Esophagus squamous epithelium (tissue), 5 donors: ENCODE measurements at regions of chr2 and their contacts with region 1.

Region 1: GRCh38 chr2:76599732-76600368 is 889.1 kb upstream of the GCFC2 start:
- DNase-seq: no peak
- H3K4me3 ChIP-seq: no peak overlapping the region
- H3K27ac ChIP-seq: no peak overlapping the region
- H3K4me1 ChIP-seq: no peaks in the 10 kb centered on the region
- H3K27me3 ChIP-seq: no peaks in the 10 kb centered on the region
- CTCF ChIP-seq: peak; percentile 25 to 62 (median 54)
- POLR2A ChIP-seq: no peak

Region 2: DNA sequence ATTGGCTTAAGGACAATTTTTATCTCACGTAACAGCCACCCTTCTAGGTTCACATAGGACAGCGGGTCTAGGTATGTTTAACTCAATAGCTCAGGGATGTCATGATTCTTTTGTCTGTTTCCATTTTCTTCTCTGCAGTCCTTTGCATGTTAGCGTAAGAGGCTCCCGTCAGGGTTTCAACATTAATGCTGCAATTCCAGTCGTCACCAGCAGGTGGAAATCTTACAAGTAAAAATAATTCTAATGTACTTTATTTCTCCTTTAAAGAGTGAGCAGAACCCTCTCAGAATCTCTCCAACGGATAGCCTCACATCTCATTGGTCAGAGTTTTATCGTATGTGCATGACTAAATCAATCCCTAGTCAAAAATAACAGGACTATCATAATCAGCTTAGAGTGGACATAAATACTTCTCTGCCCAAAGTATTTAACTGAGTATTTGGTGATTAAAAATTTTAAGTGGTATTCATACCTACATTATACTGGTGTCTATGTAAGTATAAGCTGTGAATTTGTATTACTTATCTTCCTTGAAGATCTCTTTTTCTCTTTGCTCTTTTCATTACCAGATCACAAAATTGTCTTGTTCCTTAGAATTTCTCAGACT is 401.9 kb before region 1 on chr2:
- intact Hi-C with region 1: loop called (anchors 10 kb)
- DNase-seq: no peak
- H3K4me3 ChIP-seq: no peak overlapping the region
- H3K27ac ChIP-seq: no peak overlapping the region
- H3K4me1 ChIP-seq: no peaks in the 10 kb centered on the region
- H3K27me3 ChIP-seq: no peaks in the 10 kb centered on the region
- CTCF ChIP-seq: peak in 5 of 6 experiments; percentile 53 to 72 (median 60)
- POLR2A ChIP-seq: no peak

Region 3: GRCh38 chr2:76310894-76311630 is 288.8 kb before region 1 on chr2:
- intact Hi-C with region 1: no loop called
- DNase-seq: no peak
- H3K4me3 ChIP-seq: no peak overlapping the region
- H3K27ac ChIP-seq: no peak overlapping the region
- H3K4me1 ChIP-seq: no peaks in the 10 kb centered on the region
- H3K27me3 ChIP-seq: no peaks in the 10 kb centered on the region
- CTCF ChIP-seq: no peak
- POLR2A ChIP-seq: no peak

Region 4: GRCh38 chr2:76464310-76464709 is 135.5 kb before region 1 on chr2:
- intact Hi-C with region 1: no loop called
- DNase-seq: no peak
- H3K4me3 ChIP-seq: no peak overlapping the region
- H3K27ac ChIP-seq: no peak overlapping the region
- H3K4me1 ChIP-seq: no peaks in the 10 kb centered on the region
- H3K27me3 ChIP-seq: no peaks in the 10 kb centered on the region
- CTCF ChIP-seq: no peak
- POLR2A ChIP-seq: no peak

Region 5: GRCh38 chr2:76512201-76512820 is 87.5 kb before region 1 on chr2:
- intact Hi-C with region 1: no loop called
- DNase-seq: no peak
- H3K4me3 ChIP-seq: no peak overlapping the region
- H3K27ac ChIP-seq: no peak overlapping the region
- H3K4me1 ChIP-seq: no peaks in the 10 kb centered on the region
- H3K27me3 ChIP-seq: no peaks in the 10 kb centered on the region
- CTCF ChIP-seq: no peak
- POLR2A ChIP-seq: no peak

Region 6: GRCh38 chr2:76958749-76959148 is 358.9 kb after region 1 on chr2:
- intact Hi-C with region 1: no loop called
- DNase-seq: no peak
- H3K4me3 ChIP-seq: no peak overlapping the region
- H3K27ac ChIP-seq: no peak overlapping the region
- H3K4me1 ChIP-seq: no peaks in the 10 kb centered on the region
- H3K27me3 ChIP-seq: no peaks in the 10 kb centered on the region
- CTCF ChIP-seq: no peak
- POLR2A ChIP-seq: no peak